GM12878 (cell line): ENCODE measurements at regions of chr14 and their contacts with region 1.

Region 1: GRCh38 chr14:105732748-105733622 is 206.6 kb downstream of the TMEM121 start:
- DNase-seq: no peak
- ATAC-seq: no peak
- H3K4me3 ChIP-seq: no peak overlapping the region
- H3K27ac ChIP-seq: no peak overlapping the region
- H3K4me1 ChIP-seq: no peaks in the 10 kb centered on the region
- H3K27me3 ChIP-seq: no peaks in the 10 kb centered on the region
- CTCF ChIP-seq: no peak
- EP300 ChIP-seq: no peak
- POLR2A ChIP-seq: no peak
- RAD21 ChIP-seq: no peak

Region 2: GRCh38 chr14:105636935-105637334 is 96.0 kb before region 1 on chr14:
- CTCF ChIA-PET with region 1: no interaction called
- POLR2A ChIA-PET with region 1: no interaction called
- RAD21 ChIA-PET with region 1: no interaction called
- SMC1A ChIA-PET with region 1: no interaction called
- in situ Hi-C with region 1: loop called (anchors 5 kb)
- intact Hi-C with region 1: no loop called
- DNase-seq: no peak
- ATAC-seq: no peak
- H3K4me3 ChIP-seq: no peak overlapping the region
- H3K27ac ChIP-seq: no peak overlapping the region
- H3K4me1 ChIP-seq: peaks cover 3% of the 10 kb centered on the region
- H3K27me3 ChIP-seq: no peaks in the 10 kb centered on the region; a peak in 1 of 4 replicates
- CTCF ChIP-seq: no peak
- EP300 ChIP-seq: no peak
- POLR2A ChIP-seq: no peak
- RAD21 ChIP-seq: no peak